GM12878 (cell line): ENCODE measurements at regions of chr2 and their contacts with region 1.

Region 1: DNA sequence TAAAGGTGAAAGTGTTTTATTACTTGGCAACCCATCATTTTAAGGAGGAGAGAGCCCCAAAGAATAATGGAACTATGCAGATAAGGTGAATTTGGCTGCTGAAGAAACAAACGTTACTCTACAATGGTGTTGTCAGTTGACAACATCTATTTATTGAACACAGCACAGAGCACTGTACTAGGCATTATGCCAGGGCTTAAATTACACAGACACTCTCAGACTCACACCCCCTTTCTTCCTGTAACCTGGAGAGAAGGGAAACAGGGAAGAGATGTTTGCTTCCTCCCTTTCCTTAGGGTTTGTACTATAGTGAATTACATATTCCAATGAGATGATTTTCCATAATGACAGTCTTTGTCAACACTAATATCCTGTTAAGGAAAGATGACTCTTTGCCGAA is 94.0 kb upstream of the ATP5MC3 start:
- DNase-seq: no peak
- ATAC-seq: no peak
- H3K4me3 ChIP-seq: no peak overlapping the region
- H3K27ac ChIP-seq: no peak overlapping the region
- H3K4me1 ChIP-seq: no peaks in the 10 kb centered on the region
- H3K27me3 ChIP-seq: no peaks in the 10 kb centered on the region; a peak in 1 of 4 replicates
- CTCF ChIP-seq: no peak
- EP300 ChIP-seq: no peak
- POLR2A ChIP-seq: no peak
- RAD21 ChIP-seq: no peak

Region 2: GRCh38 chr2:175251425-175252041 is 24.0 kb before region 1 on chr2:
- CTCF ChIA-PET with region 1: interaction called, 14 read pairs
- POLR2A ChIA-PET with region 1: no interaction called
- RAD21 ChIA-PET with region 1: no interaction called
- SMC1A ChIA-PET with region 1: interaction called, 4 read pairs
- in situ Hi-C with region 1: no loop called
- intact Hi-C with region 1: no loop called
- DNase-seq: no peak
- ATAC-seq: peak; percentile 56; the same call in 2 of the 3 replicates
- H3K4me3 ChIP-seq: no peak overlapping the region
- H3K27ac ChIP-seq: no peak overlapping the region
- H3K4me1 ChIP-seq: no peaks in the 10 kb centered on the region
- H3K27me3 ChIP-seq: peaks cover 0 to 1% of the 10 kb centered on the region in 2 experiments; a peak in 2 of 4 replicates
- CTCF ChIP-seq: peak; percentile 44 to 53 (median 45)
- EP300 ChIP-seq: no peak
- POLR2A ChIP-seq: no peak
- RAD21 ChIP-seq: peak; percentile 45